ENCODE measurements at regions of chr21 and their contacts with region 1.

Region 1: DNA sequence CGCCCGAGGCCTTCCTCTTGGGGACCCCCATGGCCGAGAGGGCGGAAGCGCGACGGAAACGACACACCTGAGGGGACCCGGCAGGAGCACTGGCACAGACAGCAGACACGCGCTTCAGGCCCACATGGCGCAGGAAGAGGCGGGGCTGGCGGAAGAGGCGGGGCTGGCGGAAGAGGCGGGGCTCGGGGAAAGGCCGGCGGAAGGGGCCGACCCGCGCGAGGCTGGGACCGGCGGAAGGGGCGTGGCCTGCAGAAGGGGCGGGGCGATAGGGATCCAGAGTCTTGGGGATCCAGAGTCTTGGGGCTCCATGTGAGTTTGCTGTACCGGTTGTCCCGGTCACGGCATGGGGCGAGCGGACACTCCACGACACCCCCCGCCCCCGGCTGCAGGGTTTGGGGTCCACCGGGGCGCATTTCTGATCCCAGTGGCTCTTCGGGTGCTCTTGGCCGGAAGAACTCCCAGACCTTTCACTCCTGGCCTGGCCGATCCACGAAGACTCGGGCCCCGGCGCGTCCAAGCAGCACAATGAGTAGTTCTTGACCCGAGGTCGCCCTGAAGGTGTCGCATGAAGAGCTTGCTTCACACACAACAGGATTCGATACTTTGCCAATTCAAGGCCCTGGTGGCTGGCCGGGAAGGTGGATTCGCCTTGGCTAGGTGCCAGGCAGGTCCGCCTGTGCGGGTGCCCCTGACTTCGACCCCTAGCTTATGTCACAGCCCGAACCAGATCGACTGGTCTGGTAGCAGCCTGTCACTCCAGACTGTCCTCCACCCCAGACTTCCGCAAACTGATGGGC is at the start of gene URB1:
- DNase-seq: peak; percentile 94 to 96 (median 94)
- ATAC-seq: peak; percentile 95 to 99 (median 98)
- H3K4me3 ChIP-seq: peak within 1 kb of the TSS; percentile 79 to 99 (median 82)
- H3K27ac ChIP-seq: peak within 1 kb of the TSS; percentile 80 to 96 (median 90)
- H3K4me1 ChIP-seq: peaks cover 2 to 38% (median 21%) of the 10 kb centered on the region in 12 donors
- H3K27me3 ChIP-seq: no peaks in the 10 kb centered on the region
- CTCF ChIP-seq: no peak
- POLR2A ChIP-seq: peak in 1 of 2 donors; percentile 83
- total RNA-seq, gene URB1: 6.7 to 26.0 (median 11.5) TPM

Region 2: DNA sequence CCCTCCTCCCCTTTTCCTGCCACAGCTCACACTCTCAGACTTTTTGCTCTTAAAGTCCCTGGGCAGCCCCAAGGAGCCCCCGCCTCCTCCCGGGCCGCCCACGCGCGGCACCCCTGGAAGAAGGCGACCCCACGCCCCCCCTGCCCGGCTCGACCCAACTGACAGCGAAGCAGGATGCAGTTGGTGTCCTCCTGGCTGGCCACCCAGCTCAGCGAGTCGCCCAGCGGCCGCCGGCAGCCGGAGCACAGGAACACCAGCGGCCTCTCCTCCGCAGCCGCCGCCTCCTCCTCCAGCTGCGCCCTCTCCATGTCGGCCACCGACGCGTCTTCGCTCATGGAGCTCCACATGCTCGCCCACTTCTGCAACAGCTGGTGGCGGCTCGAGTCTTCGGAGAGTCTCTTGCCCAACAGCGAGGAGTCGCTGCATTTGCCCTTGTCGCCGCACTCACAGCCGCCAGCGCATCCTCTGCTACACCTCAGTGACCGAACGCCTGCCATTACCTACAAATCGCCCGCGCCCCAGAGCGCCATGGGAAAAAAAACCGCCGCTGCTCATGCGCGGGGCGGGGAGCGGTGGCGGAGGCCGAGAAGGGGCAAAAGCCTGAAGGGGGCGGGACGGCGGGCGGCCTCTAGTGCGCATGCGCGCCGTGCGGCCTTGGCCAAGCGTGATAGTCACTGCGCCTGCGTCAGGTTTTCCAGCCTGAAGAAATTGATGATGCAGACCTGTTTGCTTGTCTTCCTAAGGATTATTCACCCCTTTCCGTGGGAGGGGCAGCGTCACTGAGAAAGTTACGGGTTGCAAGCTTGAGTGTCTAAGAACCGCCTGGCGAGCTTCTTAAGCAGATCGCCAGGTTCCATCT is 114.3 kb before region 1 on chr21 and contains the start of gene MIS18A:
- intact Hi-C with region 1: loop called in 1 of 10 experiments (anchors 5 kb)
- DNase-seq: peak; percentile 95 to 98 (median 95)
- ATAC-seq: peak; percentile 95 to 98 (median 98)
- H3K4me3 ChIP-seq: peak within 1 kb of the TSS; percentile 70 to 99 (median 79)
- H3K27ac ChIP-seq: peak within 1 kb of the TSS in 10 of 12 donors; percentile 31 to 78 (median 62)
- H3K4me1 ChIP-seq: peaks cover 7 to 22% (median 17%) of the 10 kb centered on the region in 12 donors
- H3K27me3 ChIP-seq: no peaks in the 10 kb centered on the region
- CTCF ChIP-seq: peak in 4 of 12 donors; percentile 10 to 45 (median 21)
- POLR2A ChIP-seq: peak in 1 of 2 donors; percentile 51
- total RNA-seq, gene MIS18A: 1.4 to 4.1 (median 2.9) TPM

Region 3: DNA sequence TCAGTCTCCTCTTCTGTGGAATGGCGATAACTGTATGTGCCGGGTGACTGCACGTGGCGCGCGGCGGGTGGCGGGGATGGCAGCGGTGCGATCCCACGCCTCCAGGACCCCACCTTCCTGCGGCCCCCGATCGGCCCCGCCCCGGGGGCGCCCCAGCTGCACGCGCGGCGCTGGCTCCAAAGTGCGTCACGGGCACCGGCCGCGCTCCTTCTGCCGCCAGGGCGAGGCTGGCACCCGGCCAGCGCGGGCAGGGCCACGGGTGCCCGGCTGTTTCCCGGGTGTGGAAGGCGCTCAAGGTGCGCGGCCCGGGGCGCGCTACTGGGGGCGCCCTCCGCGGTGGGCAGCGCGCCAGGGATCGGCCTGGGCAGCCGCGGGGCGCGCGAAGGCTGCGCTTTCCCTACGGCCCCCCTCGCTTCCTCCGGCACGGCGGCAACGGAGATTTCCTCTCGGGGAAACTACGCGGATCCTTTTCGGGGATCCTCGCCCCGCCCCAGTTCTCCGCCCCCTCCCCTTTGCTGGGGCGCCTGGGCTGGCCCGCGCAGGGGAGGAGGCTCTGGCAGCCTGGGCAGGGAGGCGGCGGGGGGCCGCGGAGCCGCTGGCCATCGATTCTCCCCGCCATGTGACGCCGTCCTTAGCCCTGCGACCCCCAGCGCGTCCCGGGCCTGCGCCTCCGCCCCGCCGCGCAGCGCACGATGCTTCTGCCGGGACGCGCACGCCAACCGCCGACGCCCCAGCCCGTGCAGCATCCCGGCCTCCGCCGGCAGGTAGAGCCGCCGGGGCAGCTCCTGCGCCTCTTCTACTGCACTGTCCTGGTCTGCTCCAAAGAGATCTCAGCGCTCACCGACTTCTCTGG is 19.3 kb after region 1 on chr21 and contains the start of gene EVA1C:
- intact Hi-C with region 1: no loop called
- DNase-seq: peak; percentile 75 to 86 (median 82)
- ATAC-seq: peak; percentile 29 to 78 (median 60)
- H3K4me3 ChIP-seq: peak within 1 kb of the TSS; percentile 36 to 95 (median 76)
- H3K27ac ChIP-seq: peak within 1 kb of the TSS; percentile 94 to 100 (median 99)
- H3K4me1 ChIP-seq: peaks cover 12 to 64% (median 39%) of the 10 kb centered on the region in 12 donors
- H3K27me3 ChIP-seq: no peaks in the 10 kb centered on the region
- CTCF ChIP-seq: peak in 8 of 12 donors; percentile 9 to 51 (median 28)
- POLR2A ChIP-seq: peak in 1 of 2 donors; percentile 33
- total RNA-seq, gene EVA1C: 10.1 to 44.4 (median 19.7) TPM

Region 4: GRCh38 chr21:32457360-32457840 is 64.3 kb after region 1 on chr21:
- intact Hi-C with region 1: loop called in 1 of 10 experiments (anchors 10 kb)
- DNase-seq: peak; percentile 41 to 71 (median 52)
- ATAC-seq: peak in 3 of 4 donors; percentile 40 to 52 (median 45)
- H3K4me3 ChIP-seq: no peak overlapping the region
- H3K27ac ChIP-seq: peak overlapping the region; percentile 11 to 78 (median 60)
- H3K4me1 ChIP-seq: peaks cover 9 to 36% (median 20%) of the 10 kb centered on the region in 12 donors
- H3K27me3 ChIP-seq: no peaks in the 10 kb centered on the region
- CTCF ChIP-seq: peak in 6 of 12 donors; percentile 11 to 38 (median 15)
- POLR2A ChIP-seq: no peak

Region 5: DNA sequence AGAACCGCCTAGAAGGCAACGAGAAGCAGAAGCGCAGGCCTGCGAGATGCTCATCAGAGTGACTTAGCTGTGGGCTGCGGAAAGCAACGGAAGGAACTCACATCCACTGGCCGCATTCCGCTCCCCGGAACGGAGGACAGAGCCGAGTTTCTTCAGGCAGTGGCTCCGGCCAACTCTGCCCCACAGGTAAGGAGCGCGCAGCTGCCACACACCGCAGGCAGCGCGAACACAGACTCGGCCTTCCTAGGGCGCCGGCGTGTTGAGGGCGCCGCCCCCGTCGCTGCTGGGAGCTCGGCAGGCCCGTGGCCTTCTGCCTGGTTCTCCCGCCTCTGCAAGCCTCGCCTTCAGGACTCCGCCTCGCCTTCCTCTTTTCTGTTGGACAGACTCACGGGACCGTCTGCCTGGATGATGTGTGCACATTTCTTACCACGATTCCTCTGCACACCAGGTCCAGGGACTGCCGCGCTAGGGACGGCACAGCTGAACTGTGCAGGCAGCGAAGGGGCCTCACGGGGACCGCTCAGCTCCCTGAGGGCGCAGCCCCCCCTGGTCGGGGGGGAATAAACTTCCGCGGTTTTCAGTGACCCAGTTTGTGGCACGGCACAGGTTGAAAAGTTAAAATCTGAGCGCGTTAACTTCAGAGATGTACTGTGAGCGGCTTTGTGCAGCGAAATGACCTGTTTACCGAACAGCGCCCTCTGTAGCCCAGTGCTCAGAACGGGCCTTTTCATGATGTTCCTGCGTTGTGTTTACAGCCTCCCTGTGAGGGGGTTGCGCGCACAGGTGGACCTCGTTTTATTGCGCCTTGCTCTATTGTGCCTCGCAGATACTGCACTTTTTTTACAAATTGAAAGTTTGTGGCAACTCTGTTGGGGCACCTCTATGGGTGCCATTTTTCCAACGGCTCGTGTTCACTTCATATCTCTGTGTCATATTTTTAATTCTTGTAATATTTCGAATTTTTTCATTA is 176.5 kb after region 1 on chr21:
- intact Hi-C with region 1: loop called in 1 of 10 experiments (anchors 5 kb)
- DNase-seq: peak; percentile 72 to 85 (median 75)
- ATAC-seq: peak; percentile 84 to 94 (median 94)
- H3K4me3 ChIP-seq: peak overlapping the region; percentile 28 to 73 (median 60)
- H3K27ac ChIP-seq: peak overlapping the region; percentile 37 to 88 (median 81)
- H3K4me1 ChIP-seq: peaks cover 0 to 19% (median 4%) of the 10 kb centered on the region in 12 donors
- H3K27me3 ChIP-seq: no peaks in the 10 kb centered on the region
- CTCF ChIP-seq: peak; percentile 64 to 90 (median 83)
- POLR2A ChIP-seq: peak in 1 of 2 donors; percentile 32

Region 6: GRCh38 chr21:32597205-32597604 is 204.1 kb after region 1 on chr21:
- intact Hi-C with region 1: loop called in 1 of 10 experiments (anchors 2 kb)
- DNase-seq: no peak
- ATAC-seq: no peak
- H3K4me3 ChIP-seq: no peak overlapping the region
- H3K27ac ChIP-seq: no peak overlapping the region
- H3K4me1 ChIP-seq: no peaks in the 10 kb centered on the region
- H3K27me3 ChIP-seq: no peaks in the 10 kb centered on the region
- CTCF ChIP-seq: no peak
- POLR2A ChIP-seq: no peak

Measured in heart left ventricle (tissue), 16 donors.